ENCODE measurements at regions of chr1 and their contacts with region 1.

Region 1: GRCh38 chr1:35532497-35533223 is 24.5 kb downstream of the KIAA0319L start:
- DNase-seq: no peak
- H3K4me3 ChIP-seq: no peak overlapping the region
- H3K4me3 Mint-ChIP-seq: no peak overlapping the region
- H3K27ac ChIP-seq: no peak overlapping the region
- H3K27ac Mint-ChIP-seq: no peak overlapping the region
- H3K4me1 ChIP-seq: peaks cover 23% of the 10 kb centered on the region
- H3K4me1 Mint-ChIP-seq: peaks cover 34 to 47% (median 37%) of the 10 kb centered on the region in 4 donors
- H3K27me3 ChIP-seq: no peaks in the 10 kb centered on the region
- H3K27me3 Mint-ChIP-seq: no peaks in the 10 kb centered on the region

Region 2: DNA sequence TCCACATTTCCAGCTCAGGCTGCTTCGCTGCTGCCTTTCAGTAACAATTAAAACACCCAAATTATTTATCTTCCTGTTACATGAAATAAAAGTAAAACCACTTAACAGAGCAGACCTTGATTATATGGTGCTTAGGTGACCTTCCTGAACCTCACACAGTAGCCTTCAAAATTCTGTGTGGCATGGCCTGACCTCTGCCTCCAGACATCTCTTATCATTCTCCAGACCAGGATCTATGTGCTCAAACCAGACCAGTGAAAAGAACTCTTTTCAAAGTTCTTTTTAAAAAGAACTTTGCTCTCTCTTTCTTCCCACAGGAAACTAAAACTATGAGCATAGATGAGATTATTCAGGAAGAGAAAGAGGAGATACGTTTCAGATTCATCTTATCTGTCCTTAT is 13.2 kb before region 1 on chr1:
- CTCF ChIA-PET with region 1: interaction called, 14 read pairs
- POLR2A ChIA-PET with region 1: interaction called, 4 read pairs
- intact Hi-C with region 1: no loop called
- DNase-seq: no peak
- H3K4me3 ChIP-seq: no peak overlapping the region
- H3K4me3 Mint-ChIP-seq: peak overlapping the region in 1 of 8 donors; percentile 26
- H3K27ac ChIP-seq: no peak overlapping the region
- H3K27ac Mint-ChIP-seq: peak overlapping the region; percentile 12 to 86 (median 74)
- H3K4me1 ChIP-seq: peaks cover 7% of the 10 kb centered on the region
- H3K4me1 Mint-ChIP-seq: peaks cover 24 to 52% (median 45%) of the 10 kb centered on the region in 4 donors
- H3K27me3 ChIP-seq: no peaks in the 10 kb centered on the region
- H3K27me3 Mint-ChIP-seq: no peaks in the 10 kb centered on the region

Measured in CD4-positive, alpha-beta memory T cell (primary cell).